PC-9 (cell line): ENCODE measurements at regions of chr3 and their contacts with region 1.

Region 1: DNA sequence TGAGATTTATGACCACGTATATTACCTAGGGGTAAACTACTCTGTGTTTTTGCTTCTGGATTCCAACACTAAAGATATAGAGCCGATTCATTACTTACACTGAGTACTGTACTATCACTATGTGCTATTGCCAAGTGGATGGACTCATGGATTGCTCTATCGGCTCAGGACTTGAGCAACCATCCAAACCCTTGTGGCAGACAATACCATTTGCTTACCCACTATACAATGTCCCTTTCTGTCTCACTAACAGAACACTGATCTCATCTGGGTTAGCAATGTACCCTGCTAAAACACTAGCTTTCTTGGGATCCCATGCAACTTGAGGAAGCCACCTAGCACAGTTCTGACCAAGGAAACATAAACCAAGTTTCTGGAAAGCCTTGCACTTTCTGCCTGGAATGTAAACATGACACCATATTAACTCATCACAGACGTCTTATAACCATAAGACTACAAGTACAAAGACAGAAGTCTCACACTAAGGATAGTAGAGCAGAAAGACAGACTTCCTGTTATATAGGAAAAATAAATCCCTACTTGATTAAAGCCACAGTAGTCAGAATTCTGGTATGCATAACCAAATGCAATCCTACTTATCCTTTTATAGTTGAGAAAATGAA is 38.6 kb downstream of the HACD2 start:
- DNase-seq: no peak
- H3K4me3 ChIP-seq: no peak overlapping the region
- H3K27ac ChIP-seq: no peak overlapping the region
- H3K4me1 ChIP-seq: no peaks in the 10 kb centered on the region
- H3K27me3 ChIP-seq: no peaks in the 10 kb centered on the region
- CTCF ChIP-seq: no peak

Region 2: GRCh38 chr3:124026516-124026915 is 480.3 kb after region 1 on chr3:
- CTCF ChIA-PET with region 1: interaction called, 13 read pairs
- POLR2A ChIA-PET with region 1: no interaction called
- intact Hi-C with region 1: no loop called
- DNase-seq: no peak
- H3K4me3 ChIP-seq: no peak overlapping the region
- H3K27ac ChIP-seq: no peak overlapping the region
- H3K4me1 ChIP-seq: no peaks in the 10 kb centered on the region
- H3K27me3 ChIP-seq: peaks cover 64% of the 10 kb centered on the region
- CTCF ChIP-seq: no peak